Activated CD4-positive, alpha-beta T cell treated with anti-CD3 and anti-CD28 coated beads, Interleukin-2, amount 10 ng/mL, durations not matched to agents 24 days and 14 days (primary cell): ENCODE measurements at regions of chr14 and their contacts with region 1.

Region 1: GRCh38 chr14:36553656-36554260 is 28.7 kb downstream of the NKX2-8 start:
- DNase-seq: peak; percentile 56
- H3K4me3 Mint-ChIP-seq: no peak overlapping the region
- H3K27ac Mint-ChIP-seq: no peak overlapping the region
- H3K4me1 Mint-ChIP-seq: no peaks in the 10 kb centered on the region
- H3K27me3 Mint-ChIP-seq: peaks cover 5% of the 10 kb centered on the region

Region 2: DNA sequence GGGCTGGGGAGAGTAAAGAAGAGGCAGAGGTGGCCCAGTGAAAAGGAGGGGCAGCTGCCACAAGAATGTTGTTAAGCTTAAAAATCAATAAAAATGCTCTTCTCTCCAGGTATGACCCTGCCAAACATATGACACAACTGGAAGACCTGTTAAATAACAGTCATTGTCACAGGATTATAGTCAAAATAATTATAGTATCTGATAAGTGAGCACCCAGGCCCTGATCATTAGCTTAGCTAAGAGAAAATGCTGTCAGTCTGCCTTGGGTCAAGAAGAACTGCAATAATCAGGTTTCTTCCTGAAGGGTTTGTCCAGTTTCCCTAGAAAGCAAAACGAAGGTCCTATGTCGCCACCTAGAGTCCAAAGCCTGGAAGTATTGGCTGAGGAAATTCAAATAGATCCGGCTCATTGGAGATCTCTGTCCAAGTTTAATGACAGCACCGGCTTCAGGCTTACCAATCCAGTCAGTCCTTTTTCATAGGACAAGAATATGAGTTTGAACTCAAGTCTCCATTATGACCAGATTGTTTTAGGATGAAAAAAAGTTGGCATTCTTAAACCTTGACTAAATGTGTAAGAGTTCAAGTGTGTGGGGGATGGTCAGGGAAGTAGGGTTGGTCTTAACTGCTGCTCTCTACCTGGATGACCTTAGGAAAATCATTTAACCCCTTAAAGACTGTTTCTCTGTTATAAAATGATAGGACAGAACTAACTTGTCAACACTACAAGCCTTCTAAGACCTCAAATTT is 51.2 kb after region 1 on chr14:
- intact Hi-C with region 1: loop called (anchors 1 kb)
- DNase-seq: peak; percentile 81
- H3K4me3 Mint-ChIP-seq: no peak overlapping the region
- H3K27ac Mint-ChIP-seq: no peak overlapping the region
- H3K4me1 Mint-ChIP-seq: no peaks in the 10 kb centered on the region
- H3K27me3 Mint-ChIP-seq: peaks cover 2% of the 10 kb centered on the region